ENCODE measurements at regions of chr1 and their contacts with region 1.

Region 1: GRCh38 chr1:185559684-185560331 is 174.4 kb upstream of the HMCN1 start:
- DNase-seq: peak; percentile 93
- ATAC-seq: peak; percentile 94
- H3K4me3 Mint-ChIP-seq: peak overlapping the region; percentile 48
- H3K27ac Mint-ChIP-seq: peak overlapping the region; percentile 94
- H3K4me1 Mint-ChIP-seq: peaks cover 39% of the 10 kb centered on the region
- H3K27me3 Mint-ChIP-seq: no peaks in the 10 kb centered on the region

Region 2: GRCh38 chr1:185338719-185339622 is 220.8 kb before region 1 on chr1:
- CTCF ChIA-PET with region 1: interaction called, 16 read pairs
- DNase-seq: peak; percentile 94
- ATAC-seq: peak; percentile 90
- H3K4me3 Mint-ChIP-seq: peak overlapping the region; percentile 32
- H3K27ac Mint-ChIP-seq: peak overlapping the region; percentile 85
- H3K4me1 Mint-ChIP-seq: peaks cover 54% of the 10 kb centered on the region
- H3K27me3 Mint-ChIP-seq: no peaks in the 10 kb centered on the region

Region 3: GRCh38 chr1:185439727-185440415 is 119.9 kb before region 1 on chr1:
- CTCF ChIA-PET with region 1: interaction called, 20 read pairs
- DNase-seq: peak; percentile 82
- ATAC-seq: peak; percentile 87
- H3K4me3 Mint-ChIP-seq: no peak overlapping the region
- H3K27ac Mint-ChIP-seq: no peak overlapping the region
- H3K4me1 Mint-ChIP-seq: peaks cover 32% of the 10 kb centered on the region
- H3K27me3 Mint-ChIP-seq: no peaks in the 10 kb centered on the region

Region 4: GRCh38 chr1:185636848-185637247 is 77.0 kb after region 1 on chr1:
- CTCF ChIA-PET with region 1: interaction called, 19 read pairs
- DNase-seq: peak; percentile 85
- ATAC-seq: peak; percentile 96
- H3K4me3 Mint-ChIP-seq: peak overlapping the region; percentile 7
- H3K27ac Mint-ChIP-seq: peak overlapping the region; percentile 88
- H3K4me1 Mint-ChIP-seq: peaks cover 41% of the 10 kb centered on the region
- H3K27me3 Mint-ChIP-seq: no peaks in the 10 kb centered on the region

Region 5: GRCh38 chr1:185701650-185702049 is 141.8 kb after region 1 on chr1:
- CTCF ChIA-PET with region 1: no interaction called
- DNase-seq: no peak
- ATAC-seq: peak; percentile 60
- H3K4me3 Mint-ChIP-seq: no peak overlapping the region
- H3K27ac Mint-ChIP-seq: no peak overlapping the region
- H3K4me1 Mint-ChIP-seq: peaks cover 13% of the 10 kb centered on the region
- H3K27me3 Mint-ChIP-seq: peaks cover 17% of the 10 kb centered on the region